ENCODE measurements at regions of chrX and their contacts with region 1.

Region 1: GRCh38 chrX:39242187-39242586 is 440.9 kb downstream of the MID1IP1 start:
- DNase-seq: no peak
- H3K4me3 ChIP-seq: no peak overlapping the region
- H3K27ac ChIP-seq: no peak overlapping the region
- H3K4me1 ChIP-seq: no peaks in the 10 kb centered on the region
- H3K27me3 ChIP-seq: peaks cover 0 to 8% (median 0%) of the 10 kb centered on the region in 7 donors
- CTCF ChIP-seq: peak in 8 of 11 experiments; percentile 21 to 56 (median 42)
- POLR2A ChIP-seq: no peak

Region 2: GRCh38 chrX:38754102-38754790 is 487.9 kb before region 1 on chrX:
- intact Hi-C with region 1: loop called (anchors 10 kb)
- DNase-seq: no peak
- H3K4me3 ChIP-seq: no peak overlapping the region
- H3K27ac ChIP-seq: no peak overlapping the region
- H3K4me1 ChIP-seq: no peaks in the 10 kb centered on the region
- H3K27me3 ChIP-seq: peaks cover 0 to 4% (median 0%) of the 10 kb centered on the region in 7 donors
- CTCF ChIP-seq: peak in 10 of 11 experiments; percentile 39 to 68 (median 60)
- POLR2A ChIP-seq: no peak

Region 3: GRCh38 chrX:38954520-38954919 is 287.7 kb before region 1 on chrX:
- intact Hi-C with region 1: no loop called
- DNase-seq: no peak
- H3K4me3 ChIP-seq: no peak overlapping the region
- H3K27ac ChIP-seq: no peak overlapping the region
- H3K4me1 ChIP-seq: no peaks in the 10 kb centered on the region
- H3K27me3 ChIP-seq: no peaks in the 10 kb centered on the region
- CTCF ChIP-seq: no peak
- POLR2A ChIP-seq: no peak